Body of pancreas (tissue), 4 donors: ENCODE measurements at regions of chr2 and their contacts with region 1.

Region 1: DNA sequence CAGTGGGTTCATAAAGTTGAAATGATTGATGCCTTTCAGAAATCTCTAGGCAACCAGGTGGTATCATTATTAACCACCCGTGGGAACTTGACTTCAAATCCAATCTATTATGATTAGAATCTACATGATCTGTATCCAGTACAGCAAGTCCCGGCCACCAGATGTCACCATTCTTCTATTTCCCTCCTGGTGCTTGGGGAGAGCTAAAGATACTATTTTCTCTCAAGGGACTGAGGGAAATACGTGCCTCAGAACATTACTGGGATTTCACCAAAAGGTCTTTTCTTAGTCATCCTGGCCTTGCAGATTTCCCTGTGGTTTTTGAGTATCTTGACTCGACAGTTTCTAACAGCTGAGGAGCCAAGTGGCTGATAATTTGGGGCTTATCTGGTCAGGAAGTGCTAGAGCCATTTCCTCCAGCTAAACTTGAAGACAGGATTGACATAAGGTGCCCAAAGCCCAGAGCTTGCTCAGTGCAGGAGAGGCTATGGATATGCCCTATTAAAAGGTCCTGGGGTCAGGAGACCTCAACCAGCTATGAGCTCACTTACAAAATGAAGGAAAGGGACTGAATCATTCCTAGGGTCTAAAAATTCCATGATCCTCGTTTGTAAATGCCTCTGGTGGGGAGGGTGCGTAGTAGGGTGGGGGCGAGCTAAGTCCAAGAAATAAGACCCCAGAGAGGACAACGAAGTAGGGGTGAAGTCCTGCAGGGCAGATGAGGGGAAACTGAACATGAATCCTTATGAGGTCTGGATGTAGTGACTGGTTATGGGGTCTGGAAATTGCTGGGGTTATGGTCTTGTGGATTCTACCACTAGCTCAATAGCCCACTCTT is 135.4 kb upstream of the MGAT5 start:
- DNase-seq: peak; percentile 85 to 93 (median 90)
- ATAC-seq: peak; percentile 53
- H3K4me3 ChIP-seq: no peak overlapping the region
- H3K27ac ChIP-seq: peak overlapping the region in 3 of 4 donors; percentile 28 to 53 (median 52)
- H3K4me1 ChIP-seq: peaks cover 37% of the 10 kb centered on the region
- H3K27me3 ChIP-seq: no peaks in the 10 kb centered on the region
- CTCF ChIP-seq: peak; percentile 59 to 92 (median 87)
- POLR2A ChIP-seq: no peak

Region 2: GRCh38 chr2:134245340-134245984 is 127.0 kb after region 1 on chr2:
- intact Hi-C with region 1: loop called (anchors 10 kb)
- DNase-seq: peak; percentile 73 to 85 (median 80)
- ATAC-seq: peak; percentile 66
- H3K4me3 ChIP-seq: no peak overlapping the region
- H3K27ac ChIP-seq: no peak overlapping the region
- H3K4me1 ChIP-seq: peaks cover 8% of the 10 kb centered on the region
- H3K27me3 ChIP-seq: no peaks in the 10 kb centered on the region
- CTCF ChIP-seq: peak; percentile 50 to 88 (median 67)
- POLR2A ChIP-seq: no peak

Region 3: DNA sequence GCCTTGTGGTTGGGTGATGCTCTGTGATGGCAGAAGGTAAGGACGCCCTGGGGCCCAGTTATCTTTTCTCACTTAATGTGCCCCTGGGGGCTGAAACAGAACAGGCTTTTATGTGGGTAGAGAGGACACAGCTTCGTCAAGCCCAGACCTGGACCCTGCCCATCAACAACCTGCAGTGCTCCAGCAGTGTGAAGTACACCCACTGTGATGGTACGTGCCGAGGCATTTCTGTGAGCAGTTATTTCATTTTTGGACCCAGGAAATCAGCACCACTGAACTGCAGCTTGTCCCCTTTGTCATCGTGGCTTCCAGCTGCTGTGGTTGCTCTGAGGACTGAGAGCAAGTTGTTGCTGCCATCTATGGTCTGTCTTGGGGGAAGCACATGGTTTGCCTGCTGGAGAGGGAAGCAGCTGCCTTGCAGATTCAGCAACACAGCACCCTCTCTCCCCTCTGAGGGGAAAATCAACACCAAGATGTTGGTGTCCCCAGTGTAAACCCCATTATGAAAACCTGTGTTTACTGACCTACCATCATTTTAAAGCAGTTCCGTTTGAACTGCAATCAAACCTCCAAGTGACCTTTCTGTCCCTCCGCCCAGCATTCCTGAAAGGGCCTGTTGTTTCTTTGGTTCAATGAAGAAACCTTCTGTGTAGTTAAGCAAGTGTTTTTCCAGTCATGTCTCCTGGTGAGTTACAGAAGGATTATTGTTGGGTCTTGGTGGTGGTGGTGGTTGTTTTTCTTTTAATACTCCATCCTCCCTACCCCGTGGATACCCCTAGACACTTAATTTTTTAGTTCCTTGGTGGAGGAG is 293.5 kb after region 1 on chr2:
- intact Hi-C with region 1: loop called (anchors 10 kb)
- DNase-seq: peak; percentile 72 to 84 (median 75)
- ATAC-seq: peak; percentile 93
- H3K4me3 ChIP-seq: no peak overlapping the region
- H3K27ac ChIP-seq: peak overlapping the region in 3 of 4 donors; percentile 28 to 68 (median 54)
- H3K4me1 ChIP-seq: peaks cover 20% of the 10 kb centered on the region
- H3K27me3 ChIP-seq: no peaks in the 10 kb centered on the region
- CTCF ChIP-seq: peak; percentile 9 to 79 (median 70)
- POLR2A ChIP-seq: no peak

Region 4: DNA sequence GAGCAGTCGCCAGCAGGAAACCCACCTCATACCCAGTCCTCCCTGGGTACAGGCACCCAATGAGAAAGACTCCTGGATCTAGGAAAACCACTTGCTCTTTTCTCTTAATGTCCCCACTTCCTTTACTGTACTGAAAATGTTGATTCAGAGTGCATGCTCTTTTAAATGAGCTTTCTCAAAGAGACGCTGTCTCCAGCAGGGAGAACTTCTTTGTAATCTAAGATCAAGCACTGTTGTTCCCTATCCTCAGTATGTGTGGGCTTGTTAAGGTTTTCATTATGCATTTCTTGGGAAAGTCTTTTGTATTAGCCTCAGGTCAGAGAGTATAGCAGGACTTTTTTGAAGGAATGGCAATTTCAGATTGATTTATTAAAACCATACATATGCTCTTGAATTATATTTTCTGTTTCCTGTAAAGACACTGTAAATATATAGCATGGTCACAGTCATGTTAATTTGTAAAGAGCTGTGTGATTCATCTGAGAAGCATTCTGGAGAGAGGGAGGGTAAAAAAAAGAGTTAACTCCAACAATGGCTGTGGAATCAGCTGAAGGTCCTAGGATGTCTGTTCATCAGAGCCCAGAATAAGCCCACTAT is 313.4 kb after region 1 on chr2:
- intact Hi-C with region 1: no loop called
- DNase-seq: no peak
- ATAC-seq: peak; percentile 25
- H3K4me3 ChIP-seq: no peak overlapping the region
- H3K27ac ChIP-seq: peak overlapping the region; percentile 83 to 92 (median 92)
- H3K4me1 ChIP-seq: peaks cover 83% of the 10 kb centered on the region
- H3K27me3 ChIP-seq: no peaks in the 10 kb centered on the region
- CTCF ChIP-seq: no peak
- POLR2A ChIP-seq: no peak